OCI-LY7 (cell line): ENCODE measurements at regions of chr10 and their contacts with region 1.

Region 1: DNA sequence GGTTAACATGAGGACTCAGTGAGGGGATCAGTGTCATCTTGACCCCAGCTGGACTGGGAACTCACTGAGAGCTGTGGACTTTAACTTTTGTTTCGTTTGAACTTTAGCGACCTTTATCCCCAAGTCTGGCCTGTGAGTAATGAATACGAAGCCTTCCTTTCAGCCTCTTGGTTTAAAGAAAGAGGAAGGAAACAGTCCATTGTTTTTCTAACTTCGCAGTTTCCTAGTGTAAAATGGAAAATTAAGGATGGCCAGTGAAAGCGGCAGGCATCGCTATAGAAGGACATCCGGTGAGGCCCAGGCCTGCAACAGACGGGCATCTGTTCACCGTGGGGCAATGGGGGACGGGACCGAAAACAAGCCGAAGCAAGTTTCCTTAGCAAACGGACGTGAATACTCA is 44.1 kb upstream of the ADO start:
- DNase-seq: no peak
- H3K4me3 ChIP-seq: no peak overlapping the region
- H3K27ac ChIP-seq: no peak overlapping the region
- H3K4me1 ChIP-seq: peaks cover 13% of the 10 kb centered on the region
- CTCF ChIP-seq: no peak

Region 2: DNA sequence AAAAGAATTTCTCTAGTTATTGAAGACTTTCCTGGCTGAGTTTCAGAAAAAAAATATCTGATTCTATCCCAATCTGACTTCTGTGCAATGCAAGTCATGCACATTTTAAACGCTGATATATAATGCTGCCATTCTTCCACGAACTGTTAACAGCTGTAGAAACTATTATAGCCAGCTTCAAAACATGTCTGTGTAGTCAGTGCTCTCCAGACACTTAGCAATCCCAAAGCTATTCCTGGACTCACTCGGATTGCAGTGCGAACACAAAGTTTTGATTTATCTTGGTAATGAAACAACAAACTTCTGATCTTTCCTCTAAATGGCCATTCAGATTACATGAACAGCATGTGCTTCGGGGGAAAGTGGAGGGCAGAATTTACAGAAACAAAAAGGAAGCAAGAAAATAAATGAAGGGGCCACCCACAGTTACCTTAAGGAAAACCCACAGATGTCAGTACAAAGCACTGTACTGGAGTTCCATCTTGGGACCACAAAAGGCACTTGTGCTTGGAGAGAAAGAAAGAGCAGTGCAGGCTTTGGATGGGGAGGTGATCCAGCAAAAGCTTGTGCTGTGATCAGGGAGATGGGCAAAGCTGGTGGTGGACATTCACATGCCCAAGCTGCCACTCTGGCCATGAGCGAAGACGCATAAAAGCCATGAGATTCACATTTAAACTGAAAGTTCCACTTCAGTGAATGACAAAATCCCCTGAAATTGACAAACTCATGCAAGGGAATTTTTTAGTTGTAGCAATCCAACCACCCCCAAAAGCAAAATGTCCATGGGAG is 12.0 kb after region 1 on chr10:
- CTCF ChIA-PET with region 1: no interaction called
- POLR2A ChIA-PET with region 1: interaction called, 15 read pairs
- intact Hi-C with region 1: no loop called
- DNase-seq: no peak
- H3K4me3 ChIP-seq: no peak overlapping the region
- H3K27ac ChIP-seq: no peak overlapping the region
- H3K4me1 ChIP-seq: peaks cover 9% of the 10 kb centered on the region
- CTCF ChIP-seq: no peak